ENCODE measurements at regions of chr2 and their contacts with region 1.

Region 1: GRCh38 chr2:43611987-43612894 is 16.4 kb upstream of the THADA start:
- DNase-seq: peak; percentile 83
- H3K4me3 Mint-ChIP-seq: no peak overlapping the region
- H3K27ac Mint-ChIP-seq: no peak overlapping the region
- H3K4me1 Mint-ChIP-seq: no peaks in the 10 kb centered on the region
- H3K27me3 Mint-ChIP-seq: peaks cover 2% of the 10 kb centered on the region

Region 2: DNA sequence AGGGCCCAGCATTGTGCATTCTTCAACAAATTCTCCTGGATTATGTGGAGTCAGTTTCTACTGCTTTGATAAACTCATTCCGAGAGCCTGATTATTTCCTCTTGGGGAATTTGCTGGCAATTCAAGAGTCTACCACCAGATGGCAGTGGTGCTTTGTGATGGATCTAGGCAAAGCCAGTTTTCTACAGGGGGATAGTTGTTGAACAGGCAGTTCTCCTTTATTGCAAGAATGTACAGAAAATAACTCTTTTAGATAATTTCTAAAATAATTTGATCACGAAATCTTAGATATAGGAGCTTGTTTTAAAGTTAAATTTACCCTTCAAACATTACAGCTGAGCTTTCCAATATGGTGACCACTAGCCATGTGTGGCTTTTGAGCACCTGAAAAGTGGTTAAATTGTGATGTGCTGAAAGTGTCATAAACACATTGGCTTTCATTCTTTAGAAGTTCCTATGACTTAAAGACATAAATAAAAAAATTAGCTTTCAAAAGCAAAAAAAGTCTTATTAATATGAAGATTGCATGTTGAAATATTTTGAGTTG is 753.2 kb before region 1 on chr2:
- CTCF ChIA-PET with region 1: interaction called, 4 read pairs
- POLR2A ChIA-PET with region 1: no interaction called
- intact Hi-C with region 1: loop called (anchors 5 kb)
- DNase-seq: peak; percentile 81
- H3K4me3 Mint-ChIP-seq: no peak overlapping the region
- H3K27ac Mint-ChIP-seq: no peak overlapping the region
- H3K4me1 Mint-ChIP-seq: peaks cover 6% of the 10 kb centered on the region
- H3K27me3 Mint-ChIP-seq: no peaks in the 10 kb centered on the region

Region 3: DNA sequence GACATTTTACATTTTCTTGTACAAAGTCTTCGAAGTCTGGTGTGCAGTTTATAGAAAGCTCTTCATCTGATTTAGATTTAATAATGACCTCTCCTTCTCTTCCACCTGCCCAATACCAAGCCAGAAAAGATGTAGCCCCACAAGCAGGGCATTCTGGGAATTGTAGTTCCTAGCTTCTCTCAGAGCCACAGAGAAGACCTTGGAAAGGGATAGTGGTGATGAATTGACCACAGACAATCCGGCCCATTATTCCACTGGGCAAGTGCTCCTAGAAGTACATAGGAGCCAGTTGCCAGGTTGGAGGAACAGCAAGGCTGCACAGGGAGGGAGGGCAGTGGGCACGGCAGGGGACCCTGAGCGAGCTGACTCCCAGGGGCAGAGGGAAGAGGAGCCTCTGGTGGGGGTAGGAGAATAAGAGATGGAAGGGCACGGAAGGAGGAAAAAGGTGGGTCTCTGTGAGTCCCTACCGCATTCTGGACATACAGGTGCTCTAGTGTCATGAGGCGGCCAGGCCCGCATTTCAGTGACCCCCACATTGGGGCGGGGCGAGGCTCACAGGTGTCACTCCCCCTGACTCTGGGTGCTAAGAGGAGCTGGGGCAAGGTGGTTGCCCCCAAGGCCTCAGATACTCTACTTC is 667.3 kb before region 1 on chr2:
- CTCF ChIA-PET with region 1: interaction called, 7 read pairs
- POLR2A ChIA-PET with region 1: no interaction called
- intact Hi-C with region 1: loop called (anchors 1 kb)
- DNase-seq: no peak
- H3K4me3 Mint-ChIP-seq: no peak overlapping the region
- H3K27ac Mint-ChIP-seq: no peak overlapping the region
- H3K4me1 Mint-ChIP-seq: no peaks in the 10 kb centered on the region
- H3K27me3 Mint-ChIP-seq: no peaks in the 10 kb centered on the region

Region 4: DNA sequence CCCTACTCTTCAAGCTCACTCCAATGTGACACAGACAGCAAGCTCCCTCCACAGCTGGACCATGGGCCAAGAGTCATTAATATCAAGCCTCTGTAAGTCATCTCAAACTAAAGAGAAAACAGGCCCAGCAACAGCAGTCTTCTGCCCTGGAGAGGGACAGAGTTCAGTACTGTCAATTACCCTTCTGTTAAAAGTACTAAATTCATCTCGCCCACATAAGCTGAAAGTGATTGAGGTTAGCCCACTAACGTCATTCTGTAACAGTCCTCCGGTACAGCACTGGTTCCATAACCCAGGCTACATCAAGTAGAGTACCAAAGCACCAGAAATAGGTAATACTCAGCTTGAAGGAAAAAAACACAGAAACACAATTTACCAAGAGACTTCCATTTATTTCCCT is 42.3 kb before region 1 on chr2:
- CTCF ChIA-PET with region 1: no interaction called
- POLR2A ChIA-PET with region 1: no interaction called
- intact Hi-C with region 1: no loop called
- DNase-seq: peak; percentile 58
- H3K4me3 Mint-ChIP-seq: peak overlapping the region; percentile 58
- H3K27ac Mint-ChIP-seq: peak overlapping the region; percentile 92
- H3K4me1 Mint-ChIP-seq: peaks cover 73% of the 10 kb centered on the region
- H3K27me3 Mint-ChIP-seq: no peaks in the 10 kb centered on the region

Measured in activated CD4-positive, alpha-beta memory T cell treated with anti-CD3 and anti-CD28 coated beads for 36 hours (primary cell).